ENCODE measurements at regions of chr15 and their contacts with region 1.

Region 1: DNA sequence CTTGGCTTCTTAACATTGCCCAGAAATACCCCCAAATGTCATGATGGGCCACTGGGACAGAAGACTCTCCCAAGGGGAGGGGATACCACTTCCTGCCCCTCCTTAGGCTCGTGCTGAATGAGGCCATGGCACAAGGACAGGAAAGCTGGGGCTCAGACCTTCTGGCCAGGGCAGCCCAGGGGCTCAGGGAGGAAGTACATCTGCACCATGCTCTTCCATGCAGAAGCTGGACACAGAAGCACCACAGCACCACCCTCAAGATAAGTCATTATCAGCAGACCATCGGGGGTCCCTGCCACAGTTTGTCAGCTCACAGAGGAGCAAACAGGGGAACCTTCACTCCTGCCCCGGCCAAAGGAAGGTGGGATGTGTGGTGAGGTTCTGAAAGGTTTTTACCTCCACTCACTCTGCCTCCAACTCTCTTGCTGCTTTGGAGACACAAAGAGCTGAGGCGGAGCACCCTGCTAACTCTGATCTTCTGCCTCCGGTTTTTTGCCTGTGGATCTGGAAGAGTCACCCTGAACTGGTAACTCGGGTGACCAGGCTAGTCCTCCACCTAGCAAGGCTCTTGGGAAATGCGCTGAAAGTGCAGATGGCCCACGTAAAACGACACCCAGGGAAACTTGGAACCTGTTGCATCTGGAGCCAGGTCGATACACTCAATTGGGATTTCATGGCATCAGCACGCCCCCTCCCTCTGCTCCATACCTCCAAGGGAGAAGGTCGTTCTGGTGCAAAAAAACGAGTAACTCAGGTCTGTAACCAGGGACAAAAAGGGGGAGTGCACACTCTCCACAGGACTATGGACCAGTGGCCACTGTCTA is 8.3 kb downstream of the BMF start:
- DNase-seq: peak; percentile 68

Region 2: DNA sequence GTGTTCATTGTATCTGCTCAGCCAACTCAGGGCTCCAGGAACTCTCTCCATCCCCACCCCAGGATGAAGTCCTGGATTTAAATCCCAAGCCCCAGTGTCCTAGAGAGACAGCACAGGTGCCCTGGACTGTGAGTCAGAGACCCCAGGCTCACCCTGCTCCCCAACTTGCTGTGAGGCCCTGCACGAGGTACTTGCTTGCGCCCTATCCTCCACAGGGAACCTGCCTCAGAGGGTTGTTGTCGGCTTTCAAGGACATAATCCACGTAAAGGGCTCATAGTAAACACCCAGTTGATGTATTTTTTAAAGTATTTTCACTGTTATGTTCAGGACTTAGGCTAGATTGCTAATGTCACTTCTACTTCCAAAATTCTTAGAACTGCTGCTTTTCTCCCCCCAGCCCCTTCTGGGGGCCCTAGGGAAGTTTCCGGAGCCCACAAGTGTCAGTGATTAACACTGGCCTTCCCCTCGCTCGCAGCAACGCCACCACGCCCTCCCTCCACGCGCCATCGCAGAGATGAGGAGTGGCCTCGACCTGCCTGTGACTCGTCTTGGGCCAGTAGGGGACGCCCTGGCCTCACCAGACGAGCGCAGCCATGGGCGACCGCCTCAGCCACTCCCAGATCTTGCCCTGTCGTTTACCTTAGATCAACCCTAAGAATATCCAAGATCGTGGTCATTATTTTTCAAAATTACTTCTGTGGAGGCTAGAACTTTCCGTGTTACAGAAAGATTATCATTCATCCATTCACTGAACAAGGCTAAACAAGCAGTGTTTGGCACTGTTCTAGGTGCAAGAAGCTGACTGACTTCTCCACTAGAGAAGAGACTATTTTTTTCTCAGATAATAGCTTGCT is 55.4 kb before region 1 on chr15:
- intact Hi-C with region 1: loop called in 1 of 2 experiments (anchors 2 kb)
- DNase-seq: peak; percentile 97